MCF 10A (cell line): ENCODE measurements at regions of chr3 and their contacts with region 1.

Region 1: GRCh38 chr3:132352541-132353143 is 35.4 kb downstream of the ACP3 start:
- DNase-seq: peak; percentile 81
- H3K4me3 Mint-ChIP-seq: no peak overlapping the region
- H3K27ac Mint-ChIP-seq: no peak overlapping the region
- H3K4me1 Mint-ChIP-seq: peaks cover 6% of the 10 kb centered on the region
- H3K27me3 Mint-ChIP-seq: no peaks in the 10 kb centered on the region
- CTCF ChIP-seq: peak; percentile 90

Region 2: GRCh38 chr3:132253262-132253878 is 99.3 kb before region 1 on chr3:
- CTCF ChIA-PET with region 1: interaction called, 221 read pairs
- POLR2A ChIA-PET with region 1: no interaction called
- intact Hi-C with region 1: no loop called
- DNase-seq: peak; percentile 69
- H3K4me3 Mint-ChIP-seq: no peak overlapping the region
- H3K27ac Mint-ChIP-seq: no peak overlapping the region
- H3K4me1 Mint-ChIP-seq: no peaks in the 10 kb centered on the region
- H3K27me3 Mint-ChIP-seq: no peaks in the 10 kb centered on the region
- CTCF ChIP-seq: peak; percentile 77

Region 3: GRCh38 chr3:132368962-132369361 is 16.3 kb after region 1 on chr3:
- CTCF ChIA-PET with region 1: interaction called, 12 read pairs
- POLR2A ChIA-PET with region 1: no interaction called
- intact Hi-C with region 1: no loop called
- DNase-seq: no peak
- H3K4me3 Mint-ChIP-seq: no peak overlapping the region
- H3K27ac Mint-ChIP-seq: no peak overlapping the region
- H3K4me1 Mint-ChIP-seq: no peaks in the 10 kb centered on the region
- H3K27me3 Mint-ChIP-seq: peaks cover 12% of the 10 kb centered on the region
- CTCF ChIP-seq: no peak

Region 4: DNA sequence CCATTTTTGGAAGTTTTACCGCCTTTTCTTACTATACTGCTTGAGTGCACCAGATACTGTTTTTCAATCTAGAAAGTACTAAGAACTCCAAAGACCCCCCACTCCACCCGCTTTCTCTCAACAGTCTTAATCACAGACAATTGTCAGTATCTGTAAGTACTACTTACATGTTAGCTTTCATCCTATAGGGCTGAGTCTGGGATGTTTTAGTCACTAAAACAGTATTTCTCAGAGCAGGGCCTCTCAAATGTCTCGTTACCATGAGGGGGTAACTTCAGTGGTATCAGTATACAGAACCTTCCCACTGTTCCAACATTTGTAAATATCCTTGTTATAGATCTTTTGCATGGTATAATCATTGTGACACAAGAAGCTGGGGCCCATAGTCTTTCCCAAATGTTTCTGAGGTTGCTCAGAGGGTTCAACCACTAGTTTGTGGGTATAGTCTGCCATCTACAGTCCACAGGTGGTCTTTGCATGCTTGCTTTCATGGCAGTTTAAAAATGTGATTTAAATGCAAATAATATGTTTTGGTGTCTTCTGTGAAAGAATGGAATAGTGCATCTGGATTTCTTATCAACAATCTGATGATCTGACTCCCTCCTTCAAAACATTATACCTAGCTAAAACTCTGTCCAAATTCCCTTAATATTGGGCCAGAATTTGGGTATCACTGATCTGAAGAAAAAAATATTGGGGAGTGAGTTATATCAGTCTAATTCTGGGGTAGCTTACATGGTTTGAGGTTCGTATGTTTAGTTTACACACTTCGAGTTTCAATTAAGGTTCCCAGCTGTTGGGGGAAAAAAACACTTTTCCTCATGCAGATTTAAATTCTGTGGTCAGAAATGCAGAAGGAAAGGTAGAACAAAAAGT is 46.6 kb after region 1 on chr3:
- CTCF ChIA-PET with region 1: interaction called, 343 read pairs
- POLR2A ChIA-PET with region 1: interaction called, 4 read pairs
- intact Hi-C with region 1: loop called (anchors 1 kb)
- DNase-seq: peak; percentile 66
- H3K4me3 Mint-ChIP-seq: no peak overlapping the region
- H3K27ac Mint-ChIP-seq: no peak overlapping the region
- H3K4me1 Mint-ChIP-seq: no peaks in the 10 kb centered on the region
- H3K27me3 Mint-ChIP-seq: no peaks in the 10 kb centered on the region
- CTCF ChIP-seq: peak; percentile 88

Region 5: GRCh38 chr3:132405188-132405587 is 52.5 kb after region 1 on chr3:
- CTCF ChIA-PET with region 1: interaction called, 343 read pairs
- POLR2A ChIA-PET with region 1: interaction called, 3 read pairs
- intact Hi-C with region 1: no loop called
- DNase-seq: no peak
- H3K4me3 Mint-ChIP-seq: no peak overlapping the region
- H3K27ac Mint-ChIP-seq: no peak overlapping the region
- H3K4me1 Mint-ChIP-seq: no peaks in the 10 kb centered on the region
- H3K27me3 Mint-ChIP-seq: no peaks in the 10 kb centered on the region
- CTCF ChIP-seq: no peak

Region 6: GRCh38 chr3:132535575-132536441 is 183.2 kb after region 1 on chr3:
- CTCF ChIA-PET with region 1: interaction called, 4 read pairs
- POLR2A ChIA-PET with region 1: no interaction called
- intact Hi-C with region 1: loop called (anchors 10 kb)
- DNase-seq: peak; percentile 70
- H3K4me3 Mint-ChIP-seq: no peak overlapping the region
- H3K27ac Mint-ChIP-seq: no peak overlapping the region
- H3K4me1 Mint-ChIP-seq: peaks cover 4% of the 10 kb centered on the region
- H3K27me3 Mint-ChIP-seq: no peaks in the 10 kb centered on the region
- CTCF ChIP-seq: peak; percentile 50